Heart left ventricle (tissue), 16 donors: ENCODE measurements at regions of chr17 and their contacts with region 1.

Region 1: GRCh38 chr17:68794636-68795434 is 160.4 kb downstream of the ABCA8 start:
- DNase-seq: peak in 3 of 5 donors; percentile 53 to 74 (median 55)
- ATAC-seq: peak; percentile 18 to 81 (median 70)
- H3K4me3 ChIP-seq: peak overlapping the region in 1 of 12 donors; percentile 34
- H3K27ac ChIP-seq: peak overlapping the region; percentile 65 to 93 (median 80)
- H3K4me1 ChIP-seq: peaks cover 0 to 46% (median 9%) of the 10 kb centered on the region in 12 donors
- H3K27me3 ChIP-seq: no peaks in the 10 kb centered on the region
- CTCF ChIP-seq: peak; percentile 17 to 58 (median 27)
- POLR2A ChIP-seq: no peak

Region 2: GRCh38 chr17:68763551-68763950 is 31.3 kb before region 1 on chr17:
- intact Hi-C with region 1: no loop called
- DNase-seq: no peak
- ATAC-seq: no peak
- H3K4me3 ChIP-seq: no peak overlapping the region
- H3K27ac ChIP-seq: no peak overlapping the region
- H3K4me1 ChIP-seq: peaks cover 0 to 15% (median 6%) of the 10 kb centered on the region in 12 donors
- H3K27me3 ChIP-seq: no peaks in the 10 kb centered on the region
- CTCF ChIP-seq: no peak
- POLR2A ChIP-seq: no peak

Region 3: GRCh38 chr17:68840073-68840472 is 45.2 kb after region 1 on chr17:
- intact Hi-C with region 1: loop called in 1 of 10 experiments (anchors 5 kb)
- DNase-seq: no peak
- ATAC-seq: no peak
- H3K4me3 ChIP-seq: no peak overlapping the region
- H3K27ac ChIP-seq: no peak overlapping the region
- H3K4me1 ChIP-seq: peaks cover 0 to 7% (median 0%) of the 10 kb centered on the region in 12 donors
- H3K27me3 ChIP-seq: no peaks in the 10 kb centered on the region
- CTCF ChIP-seq: no peak
- POLR2A ChIP-seq: no peak

Region 4: DNA sequence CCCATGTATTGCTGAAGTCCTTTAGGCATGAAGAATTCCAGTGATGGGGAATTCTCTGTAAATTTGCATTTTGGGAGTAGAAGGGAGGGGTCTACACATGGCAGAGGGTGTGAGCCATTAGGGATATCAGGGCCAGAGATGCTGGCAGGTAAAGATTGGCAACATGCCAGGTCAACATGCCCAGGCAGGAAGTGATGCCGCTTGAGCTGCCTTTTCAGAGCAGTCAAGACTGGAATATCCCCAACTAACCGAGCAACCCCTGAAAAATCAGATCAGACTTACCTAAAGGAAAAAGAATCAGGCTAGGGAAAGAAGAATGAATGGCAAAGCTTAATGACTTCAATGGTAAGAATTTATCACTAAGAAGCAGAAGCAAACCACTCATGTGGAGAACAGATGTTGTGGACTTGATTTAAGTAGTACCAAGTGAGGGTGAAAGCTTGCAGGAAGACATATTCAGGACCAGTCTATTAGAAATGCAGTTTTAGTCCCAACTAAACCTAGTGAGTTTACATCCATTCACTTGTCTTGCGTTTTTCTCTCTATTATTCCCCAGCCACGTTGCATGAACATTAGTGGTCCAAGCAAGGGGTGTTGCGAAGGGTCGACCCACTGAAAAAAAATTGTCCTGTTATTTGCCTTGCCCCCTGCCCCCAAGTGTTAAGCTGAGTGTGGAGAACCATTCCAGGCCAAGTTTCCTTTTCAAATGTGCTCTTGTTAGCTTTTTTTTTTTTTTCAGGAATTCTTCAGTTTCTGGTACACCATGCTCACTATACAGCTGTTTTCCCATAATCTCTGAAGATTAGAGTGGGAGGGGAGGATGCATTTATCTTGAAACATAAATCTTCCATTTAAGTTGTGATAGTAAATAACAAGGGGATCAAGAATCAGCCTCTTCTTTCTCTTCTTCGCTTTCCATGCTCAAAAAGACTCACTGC is 55.1 kb after region 1 on chr17:
- intact Hi-C with region 1: loop called in 2 of 10 experiments (anchors 5 to 10 kb)
- DNase-seq: no peak
- ATAC-seq: no peak
- H3K4me3 ChIP-seq: no peak overlapping the region
- H3K27ac ChIP-seq: peak overlapping the region in 5 of 12 donors; percentile 51 to 78 (median 64)
- H3K4me1 ChIP-seq: peaks cover 0 to 31% (median 0%) of the 10 kb centered on the region in 12 donors
- H3K27me3 ChIP-seq: no peaks in the 10 kb centered on the region
- CTCF ChIP-seq: no peak
- POLR2A ChIP-seq: no peak

Region 5: GRCh38 chr17:68909066-68909465 is 114.2 kb after region 1 on chr17:
- intact Hi-C with region 1: loop called in 4 of 10 experiments (anchors 5 to 10 kb)
- DNase-seq: peak in 4 of 5 donors; percentile 40 to 51 (median 45)
- ATAC-seq: peak; percentile 35 to 89 (median 83)
- H3K4me3 ChIP-seq: no peak overlapping the region
- H3K27ac ChIP-seq: peak overlapping the region in 10 of 12 donors; percentile 13 to 86 (median 60)
- H3K4me1 ChIP-seq: peaks cover 0 to 32% (median 14%) of the 10 kb centered on the region in 12 donors
- H3K27me3 ChIP-seq: no peaks in the 10 kb centered on the region
- CTCF ChIP-seq: no peak
- POLR2A ChIP-seq: no peak

Region 6: GRCh38 chr17:68972119-68972704 is 177.4 kb after region 1 on chr17:
- intact Hi-C with region 1: loop called in 2 of 10 experiments (anchors 5 kb)
- DNase-seq: no peak
- ATAC-seq: peak in 1 of 4 donors; percentile 60
- H3K4me3 ChIP-seq: no peak overlapping the region
- H3K27ac ChIP-seq: peak overlapping the region in 2 of 12 donors; percentile 6 to 53
- H3K4me1 ChIP-seq: peaks cover 0 to 5% (median 0%) of the 10 kb centered on the region in 12 donors
- H3K27me3 ChIP-seq: no peaks in the 10 kb centered on the region
- CTCF ChIP-seq: peak; percentile 39 to 72 (median 56)
- POLR2A ChIP-seq: no peak